ENCODE measurements at regions of chr9 and their contacts with region 1.

Region 1: DNA sequence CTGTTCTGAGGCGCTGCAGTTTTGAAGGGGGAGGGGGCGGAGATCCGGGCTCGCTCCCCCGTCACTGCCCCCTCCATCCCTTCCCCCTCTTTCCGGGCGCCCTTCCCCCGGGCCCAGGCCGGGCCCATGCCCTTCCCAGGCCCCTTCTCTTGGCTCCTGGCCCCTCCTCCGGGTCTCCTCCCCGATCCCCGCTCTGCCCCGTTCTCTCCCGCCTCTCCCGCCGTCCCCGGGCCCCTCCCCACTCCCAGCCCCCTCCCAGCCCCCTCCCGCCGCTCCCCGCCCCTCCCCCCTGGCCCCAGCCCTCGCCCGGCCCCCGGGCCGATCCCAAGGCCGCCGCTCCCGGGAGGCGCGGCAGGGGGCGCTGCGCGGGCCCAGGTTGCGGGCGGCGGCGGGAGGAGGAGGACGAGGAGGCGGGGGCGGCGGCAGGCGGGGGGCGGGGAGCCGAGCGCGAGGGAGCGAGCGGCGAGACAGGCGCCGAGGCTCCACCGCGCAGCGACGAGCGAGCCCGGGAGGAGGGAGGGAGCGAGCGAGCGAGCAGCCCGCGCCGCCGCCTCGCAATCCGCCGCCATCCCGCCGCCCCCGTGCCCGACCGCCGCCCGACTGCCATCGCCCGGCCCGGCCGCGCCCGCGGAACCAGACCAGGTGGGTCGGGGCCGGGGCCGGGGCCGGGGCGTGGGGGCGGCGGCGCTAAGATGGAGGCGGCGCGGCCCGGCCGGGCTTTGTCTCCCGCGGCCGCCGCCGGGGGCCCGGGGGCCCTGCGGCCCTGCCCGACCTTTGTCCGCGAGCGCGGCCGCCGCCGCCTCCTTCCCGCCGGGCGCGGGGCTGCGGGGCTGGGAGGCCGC is at the start of gene PRRC2B:
- DNase-seq: peak; percentile 76 to 96 (median 86)
- ATAC-seq: peak; percentile 45
- H3K4me3 ChIP-seq: peak within 1 kb of the TSS; percentile 65
- H3K4me3 Mint-ChIP-seq: peak within 1 kb of the TSS; percentile 95
- H3K27ac ChIP-seq: peak within 1 kb of the TSS; percentile 67 to 96
- H3K27ac Mint-ChIP-seq: peak within 1 kb of the TSS; percentile 96
- H3K4me1 ChIP-seq: peaks cover 50% of the 10 kb centered on the region
- H3K4me1 Mint-ChIP-seq: peaks cover 54% of the 10 kb centered on the region
- H3K27me3 ChIP-seq: no peaks in the 10 kb centered on the region
- H3K27me3 Mint-ChIP-seq: no peaks in the 10 kb centered on the region
- CTCF ChIP-seq: no peak
- total RNA-seq, gene PRRC2B: 256 to 268 TPM

Region 2: DNA sequence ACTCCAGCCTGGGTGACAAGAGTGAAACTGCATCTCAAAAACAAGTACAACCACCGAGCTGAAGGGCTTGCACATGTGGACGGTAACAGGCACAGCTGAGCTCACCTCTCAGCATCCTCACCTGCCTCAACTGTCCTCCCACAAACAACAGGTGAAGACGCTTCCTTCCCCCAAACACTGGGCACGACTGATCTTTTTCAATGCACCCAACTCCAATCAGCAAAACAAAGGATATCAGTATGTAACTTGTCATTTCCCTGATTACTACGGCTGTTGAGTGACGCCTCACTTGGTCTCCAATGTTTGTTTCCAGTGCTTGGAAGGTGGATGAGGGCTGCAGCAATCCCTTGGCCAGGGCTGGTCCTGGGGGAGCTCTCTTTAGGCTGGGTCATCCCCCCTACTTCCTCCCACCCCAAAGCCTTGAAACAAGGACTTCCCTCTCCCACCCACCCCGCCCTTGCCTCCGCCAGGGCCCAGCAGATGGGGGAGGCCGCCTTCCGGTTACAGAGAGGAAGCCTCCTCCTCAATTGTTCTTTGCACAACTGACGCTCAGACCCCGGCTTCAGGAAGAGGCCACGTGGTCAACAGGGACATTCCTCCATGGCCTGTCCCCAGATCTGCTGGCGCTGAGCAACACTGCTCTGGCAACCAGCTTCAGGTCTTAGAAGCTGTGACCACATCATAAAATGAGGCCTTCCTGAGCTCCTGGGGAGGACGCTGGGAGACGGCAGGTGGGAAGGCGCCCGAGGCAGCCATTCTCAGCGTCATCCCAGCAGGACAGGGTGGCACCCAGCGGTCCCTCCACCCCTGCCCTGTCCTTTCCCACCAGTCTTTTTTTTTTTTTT is 123.5 kb before region 1 on chr9:
- CTCF ChIA-PET with region 1: no interaction called
- POLR2A ChIA-PET with region 1: interaction called, 20 read pairs
- intact Hi-C with region 1: loop called (anchors 5 kb)
- DNase-seq: peak in 9 of 14 experiments; percentile 44 to 80 (median 59)
- ATAC-seq: peak; percentile 11
- H3K4me3 ChIP-seq: peak overlapping the region; percentile 99
- H3K4me3 Mint-ChIP-seq: peak overlapping the region; percentile 97
- H3K27ac ChIP-seq: peak overlapping the region; percentile 83 to 94
- H3K27ac Mint-ChIP-seq: peak overlapping the region; percentile 100
- H3K4me1 ChIP-seq: peaks cover 74% of the 10 kb centered on the region
- H3K4me1 Mint-ChIP-seq: peaks cover 60% of the 10 kb centered on the region
- H3K27me3 ChIP-seq: no peaks in the 10 kb centered on the region
- H3K27me3 Mint-ChIP-seq: no peaks in the 10 kb centered on the region
- CTCF ChIP-seq: no peak

Region 3: GRCh38 chr9:131334629-131335367 is 59.0 kb before region 1 on chr9:
- CTCF ChIA-PET with region 1: no interaction called
- POLR2A ChIA-PET with region 1: no interaction called
- intact Hi-C with region 1: no loop called
- DNase-seq: no peak
- ATAC-seq: no peak
- H3K4me3 ChIP-seq: no peak overlapping the region
- H3K4me3 Mint-ChIP-seq: no peak overlapping the region
- H3K27ac ChIP-seq: no peak overlapping the region
- H3K27ac Mint-ChIP-seq: no peak overlapping the region
- H3K4me1 ChIP-seq: peaks cover 7% of the 10 kb centered on the region
- H3K4me1 Mint-ChIP-seq: peaks cover 4% of the 10 kb centered on the region
- H3K27me3 ChIP-seq: no peaks in the 10 kb centered on the region
- H3K27me3 Mint-ChIP-seq: no peaks in the 10 kb centered on the region
- CTCF ChIP-seq: no peak

Region 4: GRCh38 chr9:131349881-131350563 is 43.8 kb before region 1 on chr9:
- CTCF ChIA-PET with region 1: interaction called, 5 read pairs
- POLR2A ChIA-PET with region 1: interaction called, 4 read pairs
- intact Hi-C with region 1: loop called in 1 of 2 experiments (anchors 5 kb)
- DNase-seq: peak; percentile 82 to 92 (median 88)
- ATAC-seq: peak; percentile 99
- H3K4me3 ChIP-seq: no peak overlapping the region
- H3K4me3 Mint-ChIP-seq: no peak overlapping the region
- H3K27ac ChIP-seq: no peak overlapping the region
- H3K27ac Mint-ChIP-seq: peak overlapping the region; percentile 30
- H3K4me1 ChIP-seq: peaks cover 11% of the 10 kb centered on the region
- H3K4me1 Mint-ChIP-seq: peaks cover 9% of the 10 kb centered on the region
- H3K27me3 ChIP-seq: no peaks in the 10 kb centered on the region
- H3K27me3 Mint-ChIP-seq: no peaks in the 10 kb centered on the region
- CTCF ChIP-seq: peak; percentile 92

Region 5: DNA sequence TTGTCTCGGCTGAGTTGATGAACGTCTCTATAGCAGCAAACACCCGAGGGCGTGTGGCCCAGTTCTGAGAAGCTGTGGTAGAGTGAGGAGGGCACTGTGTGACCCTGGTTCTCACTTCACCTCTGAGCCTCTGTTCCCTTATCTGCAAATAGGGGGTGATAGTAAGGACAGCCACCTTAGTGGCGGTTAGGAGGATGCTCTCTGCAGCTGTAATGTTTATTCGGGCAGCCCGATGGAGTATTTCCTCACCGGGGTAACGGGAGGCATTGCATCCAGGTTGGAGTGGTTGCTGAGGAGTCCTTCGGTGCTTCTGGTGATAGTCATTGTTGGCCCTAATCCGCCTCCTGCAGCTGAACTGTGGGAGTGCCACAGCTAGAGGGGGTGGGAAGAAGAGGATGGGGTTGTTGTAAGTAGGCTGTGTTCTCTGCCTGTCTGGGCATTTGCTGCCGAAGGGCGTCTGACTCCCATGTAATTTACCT is 13.9 kb after region 1 on chr9:
- CTCF ChIA-PET with region 1: interaction called, 20 read pairs
- POLR2A ChIA-PET with region 1: interaction called, 83 read pairs
- intact Hi-C with region 1: loop called (anchors 1 to 2 kb)
- DNase-seq: peak in 12 of 14 experiments; percentile 26 to 81 (median 52)
- ATAC-seq: peak; percentile 78
- H3K4me3 ChIP-seq: peak overlapping the region; percentile 39
- H3K4me3 Mint-ChIP-seq: peak overlapping the region; percentile 89
- H3K27ac ChIP-seq: peak overlapping the region; percentile 18 to 39
- H3K27ac Mint-ChIP-seq: peak overlapping the region; percentile 86
- H3K4me1 ChIP-seq: peaks cover 93% of the 10 kb centered on the region
- H3K4me1 Mint-ChIP-seq: peaks cover 93% of the 10 kb centered on the region
- H3K27me3 ChIP-seq: no peaks in the 10 kb centered on the region
- H3K27me3 Mint-ChIP-seq: no peaks in the 10 kb centered on the region
- CTCF ChIP-seq: peak; percentile 71

Region 6: GRCh38 chr9:131432597-131433306 is 38.9 kb after region 1 on chr9:
- CTCF ChIA-PET with region 1: no interaction called
- POLR2A ChIA-PET with region 1: interaction called, 5 read pairs
- intact Hi-C with region 1: loop called in 1 of 2 experiments (anchors 5 kb)
- DNase-seq: peak in 1 of 14 experiments; percentile 21
- ATAC-seq: no peak
- H3K4me3 ChIP-seq: no peak overlapping the region
- H3K4me3 Mint-ChIP-seq: no peak overlapping the region
- H3K27ac ChIP-seq: no peak overlapping the region
- H3K27ac Mint-ChIP-seq: peak overlapping the region; percentile 27
- H3K4me1 ChIP-seq: peaks cover 25% of the 10 kb centered on the region
- H3K4me1 Mint-ChIP-seq: peaks cover 35% of the 10 kb centered on the region
- H3K27me3 ChIP-seq: no peaks in the 10 kb centered on the region
- H3K27me3 Mint-ChIP-seq: no peaks in the 10 kb centered on the region
- CTCF ChIP-seq: no peak

Region 7: GRCh38 chr9:131502781-131503625 is 109.2 kb after region 1 on chr9 and contains the start of gene POMT1:
- CTCF ChIA-PET with region 1: no interaction called
- POLR2A ChIA-PET with region 1: interaction called, 12 read pairs
- intact Hi-C with region 1: loop called in 1 of 2 experiments (anchors 5 kb)
- DNase-seq: peak; percentile 81 to 96 (median 89)
- ATAC-seq: peak; percentile 45
- H3K4me3 ChIP-seq: peak within 1 kb of the TSS; percentile 85
- H3K4me3 Mint-ChIP-seq: peak within 1 kb of the TSS; percentile 85
- H3K27ac ChIP-seq: peak within 1 kb of the TSS; percentile 18 to 76
- H3K27ac Mint-ChIP-seq: peak within 1 kb of the TSS; percentile 90
- H3K4me1 ChIP-seq: peaks cover 63% of the 10 kb centered on the region
- H3K4me1 Mint-ChIP-seq: peaks cover 67% of the 10 kb centered on the region
- H3K27me3 ChIP-seq: no peaks in the 10 kb centered on the region
- H3K27me3 Mint-ChIP-seq: no peaks in the 10 kb centered on the region
- CTCF ChIP-seq: no peak
- total RNA-seq, gene POMT1: 50.1 to 50.5 TPM

Measured in CD4-positive, alpha-beta T cell (primary cell).